Activated CD4-positive, alpha-beta T cell treated with anti-CD3 and anti-CD28 coated beads for 36 hours (primary cell): ENCODE measurements at regions of chrX and their contacts with region 1.

Region 1: GRCh38 chrX:1537035-1537715 is at the start of gene P2RY8:
- DNase-seq: peak; percentile 89
- ATAC-seq: peak; percentile 75
- H3K4me3 Mint-ChIP-seq: peak within 1 kb of the TSS; percentile 87
- H3K27ac Mint-ChIP-seq: peak within 1 kb of the TSS; percentile 93
- H3K4me1 Mint-ChIP-seq: peaks cover 15% of the 10 kb centered on the region
- H3K27me3 Mint-ChIP-seq: no peaks in the 10 kb centered on the region
- total RNA-seq, gene P2RY8: 19.8 to 21.2 TPM

Region 2: DNA sequence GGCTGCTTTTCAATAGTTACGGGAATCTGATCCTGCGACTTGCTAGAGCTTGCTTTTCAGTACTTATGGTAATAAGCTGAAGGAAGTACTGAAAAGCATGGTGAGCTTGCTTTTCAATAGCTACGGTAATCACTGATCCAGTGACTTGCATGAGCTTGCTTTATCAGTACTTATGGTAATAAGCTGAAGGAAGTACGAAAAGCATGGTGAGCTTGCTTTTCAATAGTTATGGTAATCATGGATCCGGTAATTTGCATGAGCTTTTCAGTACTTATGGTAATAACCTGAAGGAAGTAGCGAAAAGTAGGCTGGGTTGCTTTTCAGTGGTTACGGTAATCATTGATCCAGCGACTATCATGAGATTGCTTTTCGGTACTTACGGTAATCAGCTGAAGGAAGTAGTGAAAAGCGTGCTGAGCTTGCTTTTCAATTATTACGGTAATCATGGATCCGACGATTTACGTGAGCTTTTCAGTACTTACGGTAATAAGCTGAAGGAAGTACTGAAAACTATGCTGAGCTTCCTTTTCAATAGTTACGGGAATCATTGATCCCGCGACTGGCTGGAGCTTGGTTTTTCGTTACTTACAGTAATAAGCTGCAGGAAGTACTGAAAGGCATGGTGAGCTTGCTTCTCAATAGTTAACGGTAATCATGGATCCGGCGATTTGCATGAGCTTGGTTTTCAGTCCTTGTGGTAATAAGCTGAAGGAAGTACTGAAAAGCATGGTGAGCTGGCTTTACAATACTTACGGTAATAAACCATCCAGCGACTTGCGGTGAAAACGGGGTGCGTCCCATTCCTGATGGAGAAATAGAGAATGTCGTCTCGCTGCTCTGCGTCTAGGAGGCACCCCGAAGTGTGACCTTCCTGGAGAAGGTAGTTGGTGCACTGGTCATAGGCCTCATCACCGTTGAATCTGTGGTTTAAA is 331.2 kb before region 1 on chrX:
- CTCF ChIA-PET with region 1: no interaction called
- POLR2A ChIA-PET with region 1: no interaction called
- intact Hi-C with region 1: loop called in 1 of 2 experiments (anchors 5 kb)
- DNase-seq: peak; percentile 46
- ATAC-seq: peak; percentile 53
- H3K4me3 Mint-ChIP-seq: peak overlapping the region; percentile 67
- H3K27ac Mint-ChIP-seq: peak overlapping the region; percentile 42
- H3K4me1 Mint-ChIP-seq: peaks cover 29% of the 10 kb centered on the region
- H3K27me3 Mint-ChIP-seq: peaks cover 4% of the 10 kb centered on the region

Region 3: GRCh38 chrX:1323315-1323714 is 213.9 kb before region 1 on chrX:
- CTCF ChIA-PET with region 1: no interaction called
- POLR2A ChIA-PET with region 1: no interaction called
- intact Hi-C with region 1: loop called in 1 of 2 experiments (anchors 5 kb)
- DNase-seq: peak; percentile 78
- ATAC-seq: peak; percentile 78
- H3K4me3 Mint-ChIP-seq: no peak overlapping the region
- H3K27ac Mint-ChIP-seq: peak overlapping the region; percentile 51
- H3K4me1 Mint-ChIP-seq: peaks cover 18% of the 10 kb centered on the region
- H3K27me3 Mint-ChIP-seq: peaks cover 8% of the 10 kb centered on the region

Region 4: DNA sequence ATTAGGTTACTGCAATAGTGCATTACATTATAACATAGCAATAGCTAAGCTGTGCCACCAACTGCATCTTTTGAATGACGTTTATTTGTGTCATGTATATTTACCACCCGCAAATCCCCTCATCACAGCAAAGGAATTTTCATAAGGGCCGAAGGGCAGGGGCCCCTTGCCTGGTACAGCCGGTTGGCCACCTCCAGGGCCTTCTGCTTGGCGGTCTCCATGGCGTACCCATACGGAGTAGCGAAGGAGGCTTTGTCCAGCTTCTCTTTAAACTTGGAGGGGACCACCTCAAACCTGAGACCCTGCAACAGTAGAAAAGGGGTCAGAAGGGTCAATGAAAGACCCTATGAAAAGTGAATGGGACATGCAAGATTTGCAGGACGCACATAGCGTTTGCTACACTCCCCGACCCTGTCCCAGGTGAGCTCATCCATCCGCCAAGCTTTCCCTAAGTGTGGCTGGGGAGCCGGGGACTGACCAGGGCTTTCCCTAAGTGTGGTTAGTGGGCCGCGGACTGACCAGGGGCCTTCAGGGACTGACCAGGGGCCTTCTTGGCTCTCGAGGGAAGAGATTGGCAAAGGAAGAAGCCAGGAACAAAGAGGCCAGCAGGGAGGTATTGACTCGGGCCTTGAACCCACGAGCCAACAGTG is 95.0 kb before region 1 on chrX:
- CTCF ChIA-PET with region 1: no interaction called
- POLR2A ChIA-PET with region 1: no interaction called
- intact Hi-C with region 1: no loop called
- DNase-seq: no peak
- ATAC-seq: no peak
- H3K4me3 Mint-ChIP-seq: no peak overlapping the region
- H3K27ac Mint-ChIP-seq: no peak overlapping the region
- H3K4me1 Mint-ChIP-seq: no peaks in the 10 kb centered on the region
- H3K27me3 Mint-ChIP-seq: no peaks in the 10 kb centered on the region

Region 5: GRCh38 chrX:1462596-1463251 is 74.5 kb before region 1 on chrX:
- CTCF ChIA-PET with region 1: no interaction called
- POLR2A ChIA-PET with region 1: no interaction called
- intact Hi-C with region 1: loop called (anchors 1 kb)
- DNase-seq: peak; percentile 87
- ATAC-seq: peak; percentile 90
- H3K4me3 Mint-ChIP-seq: peak overlapping the region; percentile 53
- H3K27ac Mint-ChIP-seq: peak overlapping the region; percentile 97
- H3K4me1 Mint-ChIP-seq: peaks cover 54% of the 10 kb centered on the region
- H3K27me3 Mint-ChIP-seq: no peaks in the 10 kb centered on the region

Region 6: GRCh38 chrX:1521459-1521956 is 15.7 kb before region 1 on chrX:
- CTCF ChIA-PET with region 1: no interaction called
- POLR2A ChIA-PET with region 1: no interaction called
- intact Hi-C with region 1: loop called in 1 of 2 experiments (anchors 1 kb)
- DNase-seq: peak; percentile 79
- ATAC-seq: peak; percentile 72
- H3K4me3 Mint-ChIP-seq: peak overlapping the region; percentile 60
- H3K27ac Mint-ChIP-seq: peak overlapping the region; percentile 77
- H3K4me1 Mint-ChIP-seq: peaks cover 52% of the 10 kb centered on the region
- H3K27me3 Mint-ChIP-seq: no peaks in the 10 kb centered on the region

Region 7: GRCh38 chrX:1591102-1591900 is 54.1 kb after region 1 on chrX and contains the start of gene AKAP17A:
- CTCF ChIA-PET with region 1: no interaction called
- POLR2A ChIA-PET with region 1: no interaction called
- intact Hi-C with region 1: loop called (anchors 1 to 2 kb)
- DNase-seq: peak; percentile 99
- ATAC-seq: peak; percentile 91
- H3K4me3 Mint-ChIP-seq: peak within 1 kb of the TSS; percentile 91
- H3K27ac Mint-ChIP-seq: peak within 1 kb of the TSS; percentile 89
- H3K4me1 Mint-ChIP-seq: peaks cover 27% of the 10 kb centered on the region
- H3K27me3 Mint-ChIP-seq: no peaks in the 10 kb centered on the region
- total RNA-seq, gene AKAP17A: 49.7 to 51.2 TPM

Region 8: DNA sequence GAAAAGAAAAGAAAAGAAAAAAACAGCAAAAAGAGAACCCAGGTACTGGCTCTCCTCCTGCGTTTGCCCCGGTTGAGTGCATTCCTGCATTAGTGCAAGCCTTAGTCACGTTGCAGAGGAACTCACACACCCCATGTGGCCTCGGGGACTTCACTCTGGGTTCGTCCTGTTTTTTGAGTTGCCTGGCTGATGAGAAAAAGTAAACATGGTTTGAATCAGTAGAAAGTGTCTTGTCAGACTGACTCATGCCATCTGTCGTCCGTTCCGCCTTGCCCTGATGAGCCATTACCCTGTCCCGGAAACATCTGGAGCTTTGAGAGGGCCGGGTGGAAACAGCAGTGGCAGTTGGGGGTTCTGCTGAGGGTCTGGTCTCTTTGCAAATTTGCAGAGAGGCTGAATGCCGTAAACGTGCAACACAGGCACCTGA is 1170.2 kb after region 1 on chrX:
- CTCF ChIA-PET with region 1: no interaction called
- POLR2A ChIA-PET with region 1: no interaction called
- intact Hi-C with region 1: loop called in 1 of 2 experiments (anchors 1 kb)
- DNase-seq: peak; percentile 86
- ATAC-seq: peak; percentile 61
- H3K4me3 Mint-ChIP-seq: peak overlapping the region; percentile 22
- H3K27ac Mint-ChIP-seq: peak overlapping the region; percentile 97
- H3K4me1 Mint-ChIP-seq: peaks cover 90% of the 10 kb centered on the region
- H3K27me3 Mint-ChIP-seq: no peaks in the 10 kb centered on the region